ENCODE measurements at regions of chr14 and their contacts with region 1.

Region 1: GRCh38 chr14:68335312-68335711 is 457.6 kb downstream of the ZFP36L1 start:
- DNase-seq: no peak
- ATAC-seq: no peak
- H3K4me3 ChIP-seq: no peak overlapping the region
- H3K4me3 Mint-ChIP-seq: no peak overlapping the region
- H3K27ac ChIP-seq: no peak overlapping the region
- H3K27ac Mint-ChIP-seq: no peak overlapping the region
- H3K4me1 ChIP-seq: peaks cover 0 to 11% of the 10 kb centered on the region in 2 experiments
- H3K4me1 Mint-ChIP-seq: peaks cover 2 to 23% (median 19%) of the 10 kb centered on the region in 3 donors
- H3K27me3 ChIP-seq: no peaks in the 10 kb centered on the region
- H3K27me3 Mint-ChIP-seq: no peaks in the 10 kb centered on the region

Region 2: DNA sequence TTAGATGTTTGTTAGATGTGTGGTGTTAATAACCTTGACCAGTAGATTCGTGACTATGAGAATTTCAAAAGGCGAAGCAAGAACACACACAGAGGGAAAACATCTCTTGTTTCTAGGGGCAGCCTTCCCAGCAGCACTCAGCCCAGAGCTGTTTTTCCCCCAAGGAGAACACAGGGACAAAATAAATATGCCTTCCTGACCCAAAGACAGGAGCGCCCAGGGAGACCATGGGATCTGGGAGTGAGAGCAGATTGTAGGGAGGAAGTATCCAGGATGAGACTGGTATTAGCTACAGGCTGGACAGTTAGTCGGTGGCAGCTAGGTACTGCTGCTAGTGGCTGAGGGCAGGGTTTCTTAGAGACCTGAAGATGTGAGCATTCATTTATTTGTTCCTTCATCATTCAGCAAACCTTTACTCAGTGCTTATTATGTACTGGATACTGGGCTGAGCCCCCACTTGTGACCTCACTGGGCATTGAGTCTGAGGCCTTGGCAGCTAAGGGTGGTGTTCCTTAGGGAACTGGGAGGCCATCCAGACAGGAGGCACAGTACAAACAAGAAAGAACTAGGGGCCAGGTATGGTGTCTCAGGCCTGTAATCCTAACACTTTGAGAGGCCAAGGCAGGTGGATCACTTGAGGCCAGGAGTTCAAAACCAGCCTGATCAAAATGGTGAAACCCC is 12.2 kb before region 1 on chr14:
- CTCF ChIA-PET with region 1: no interaction called
- POLR2A ChIA-PET with region 1: interaction called in 1 of 2 experiments, 13 read pairs
- DNase-seq: no peak
- ATAC-seq: no peak
- H3K4me3 ChIP-seq: no peak overlapping the region
- H3K4me3 Mint-ChIP-seq: no peak overlapping the region
- H3K27ac ChIP-seq: no peak overlapping the region
- H3K27ac Mint-ChIP-seq: no peak overlapping the region
- H3K4me1 ChIP-seq: no peaks in the 10 kb centered on the region
- H3K4me1 Mint-ChIP-seq: peaks cover 7 to 20% (median 17%) of the 10 kb centered on the region in 3 donors
- H3K27me3 ChIP-seq: no peaks in the 10 kb centered on the region
- H3K27me3 Mint-ChIP-seq: no peaks in the 10 kb centered on the region

Measured in T-cell (primary cell).